Panc1 (cell line): ENCODE measurements at regions of chr3 and their contacts with region 1.

Region 1: GRCh38 chr3:44363591-44363990 is 25.0 kb downstream of the TCAIM start:
- DNase-seq: no peak
- ATAC-seq: no peak
- H3K4me3 ChIP-seq: no peak overlapping the region
- H3K27ac ChIP-seq: no peak overlapping the region
- H3K4me1 ChIP-seq: no peaks in the 10 kb centered on the region; the same call in 1 of the 2 replicates
- H3K27me3 ChIP-seq: no peaks in the 10 kb centered on the region
- CTCF ChIP-seq: no peak

Region 2: DNA sequence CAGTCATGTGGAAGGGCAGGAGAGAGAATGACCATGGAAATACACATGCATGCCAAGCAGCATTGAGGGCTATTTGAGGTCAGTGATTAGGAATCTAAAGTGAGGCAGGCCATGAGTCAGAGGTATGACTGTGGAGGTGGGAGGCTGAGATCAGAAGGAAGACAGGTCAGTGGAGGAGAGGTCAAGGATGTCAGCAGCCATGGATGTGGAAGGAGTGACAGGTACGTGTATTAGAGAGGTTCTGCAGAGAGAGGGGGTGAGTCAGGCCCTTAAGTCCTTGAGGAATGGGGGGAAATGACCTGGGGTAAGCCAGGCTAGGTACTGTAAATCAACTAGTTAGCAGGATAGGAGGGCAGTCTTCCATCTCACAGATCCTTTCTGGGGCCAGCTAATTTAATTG is 908.4 kb before region 1 on chr3:
- CTCF ChIA-PET with region 1: no interaction called
- POLR2A ChIA-PET with region 1: no interaction called
- in situ Hi-C with region 1: no loop called
- intact Hi-C with region 1: no loop called
- DNase-seq: peak; percentile 15
- ATAC-seq: peak; percentile 51; the same call in 1 of the 2 replicates
- H3K4me3 ChIP-seq: no peak overlapping the region
- H3K27ac ChIP-seq: no peak overlapping the region
- H3K4me1 ChIP-seq: no peaks in the 10 kb centered on the region
- H3K27me3 ChIP-seq: no peaks in the 10 kb centered on the region
- CTCF ChIP-seq: no peak

Region 3: DNA sequence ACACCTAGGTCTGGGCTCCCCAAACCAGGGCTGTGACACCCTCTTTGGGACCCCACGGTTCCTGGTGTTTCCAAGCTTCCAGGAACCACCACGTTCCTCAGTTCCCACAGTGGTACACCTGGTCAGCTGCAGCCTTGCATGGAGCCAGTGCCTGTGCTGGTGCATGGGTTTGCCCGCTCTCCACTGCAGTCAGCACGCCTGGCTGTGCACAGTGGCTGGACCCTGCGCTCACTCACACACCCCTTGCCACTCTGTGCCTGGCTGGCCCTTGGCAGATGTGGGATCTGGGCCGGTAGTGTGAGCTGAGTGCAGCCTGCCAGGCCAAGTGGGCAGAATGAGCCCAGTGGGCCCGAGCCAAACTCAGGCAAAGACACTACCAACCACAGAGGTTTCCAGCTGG is 23.8 kb after region 1 on chr3:
- CTCF ChIA-PET with region 1: no interaction called
- POLR2A ChIA-PET with region 1: interaction called, 11 read pairs
- in situ Hi-C with region 1: no loop called
- intact Hi-C with region 1: no loop called
- DNase-seq: no peak
- ATAC-seq: no peak
- H3K4me3 ChIP-seq: no peak overlapping the region
- H3K27ac ChIP-seq: no peak overlapping the region
- H3K4me1 ChIP-seq: no peaks in the 10 kb centered on the region
- H3K27me3 ChIP-seq: no peaks in the 10 kb centered on the region
- CTCF ChIP-seq: no peak